K562 (cell line): ENCODE measurements at regions of chr10 and their contacts with region 1.

Region 1: GRCh38 chr10:104209575-104210198 is 22.5 kb downstream of the CFAP43 start:
- DNase-seq: peak; percentile 27 to 46 (median 36)
- ATAC-seq: peak; percentile 87
- H3K4me3 ChIP-seq: no peak overlapping the region
- H3K27ac ChIP-seq: no peak overlapping the region
- H3K4me1 ChIP-seq: no peaks in the 10 kb centered on the region
- H3K27me3 ChIP-seq: no peaks in the 10 kb centered on the region
- CTCF ChIP-seq: peak; percentile 42 to 60 (median 54); a peak in 4 of 6 replicates
- EP300 ChIP-seq: no peak
- POLR2A ChIP-seq: no peak
- RAD21 ChIP-seq: peak; percentile 44 to 69

Region 2: DNA sequence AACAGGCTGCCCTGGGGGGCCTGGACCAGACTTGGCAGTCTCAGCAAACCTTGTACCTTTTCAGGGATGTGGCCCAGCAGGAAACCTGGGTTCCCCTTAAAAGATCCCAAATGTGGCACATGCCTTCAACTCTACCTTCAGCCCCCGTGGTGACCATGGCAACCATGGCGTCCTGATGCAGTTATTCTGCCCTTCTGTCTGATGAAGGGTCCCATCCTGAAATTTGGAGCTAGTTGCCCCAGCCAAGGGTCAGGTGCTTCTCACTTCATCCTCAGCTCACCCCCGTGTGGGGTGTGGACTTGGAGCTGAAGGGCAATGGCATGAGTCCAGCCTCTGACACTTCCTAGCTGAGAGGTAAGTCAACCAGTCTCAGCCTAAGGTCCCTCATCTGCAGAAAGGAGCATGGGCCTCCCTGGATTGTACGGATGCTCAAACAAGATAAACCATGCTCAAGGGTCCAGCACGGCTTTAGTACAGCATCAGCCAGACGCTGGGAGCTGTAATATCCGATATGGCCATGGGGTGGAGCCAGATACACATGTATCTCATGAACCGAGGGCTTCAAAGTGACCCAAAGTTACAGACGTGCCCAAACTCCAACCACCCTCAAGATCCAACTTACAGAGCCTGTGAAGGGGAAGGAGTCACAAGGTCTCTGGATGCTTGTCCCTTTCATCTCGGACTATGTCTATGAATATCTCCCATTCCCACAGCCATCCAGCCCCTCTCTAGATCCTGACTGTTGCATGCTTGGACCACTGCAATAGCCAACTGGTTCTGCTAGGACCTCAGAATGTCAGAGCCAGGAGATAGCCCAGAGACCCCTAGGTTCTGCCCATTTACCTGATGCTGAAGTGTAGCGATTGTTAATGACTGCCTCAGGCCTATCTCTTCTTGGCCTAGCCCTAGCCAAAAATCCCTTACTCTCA is 496.9 kb before region 1 on chr10:
- CTCF ChIA-PET with region 1: no interaction called
- POLR2A ChIA-PET with region 1: interaction called, 4 read pairs
- in situ Hi-C with region 1: loop called (anchors 10 kb)
- intact Hi-C with region 1: loop called (anchors 5 kb)
- DNase-seq: peak; percentile 56 to 75 (median 62)
- ATAC-seq: peak; percentile 93
- H3K4me3 ChIP-seq: no peak overlapping the region
- H3K27ac ChIP-seq: no peak overlapping the region
- H3K4me1 ChIP-seq: no peaks in the 10 kb centered on the region; a peak in 1 of 5 replicates
- H3K27me3 ChIP-seq: peaks cover 0 to 20% of the 10 kb centered on the region in 2 experiments; a peak in 1 of 5 replicates
- CTCF ChIP-seq: peak; percentile 79 to 87 (median 85)
- EP300 ChIP-seq: no peak
- POLR2A ChIP-seq: no peak
- RAD21 ChIP-seq: peak; percentile 87 to 90

Region 3: DNA sequence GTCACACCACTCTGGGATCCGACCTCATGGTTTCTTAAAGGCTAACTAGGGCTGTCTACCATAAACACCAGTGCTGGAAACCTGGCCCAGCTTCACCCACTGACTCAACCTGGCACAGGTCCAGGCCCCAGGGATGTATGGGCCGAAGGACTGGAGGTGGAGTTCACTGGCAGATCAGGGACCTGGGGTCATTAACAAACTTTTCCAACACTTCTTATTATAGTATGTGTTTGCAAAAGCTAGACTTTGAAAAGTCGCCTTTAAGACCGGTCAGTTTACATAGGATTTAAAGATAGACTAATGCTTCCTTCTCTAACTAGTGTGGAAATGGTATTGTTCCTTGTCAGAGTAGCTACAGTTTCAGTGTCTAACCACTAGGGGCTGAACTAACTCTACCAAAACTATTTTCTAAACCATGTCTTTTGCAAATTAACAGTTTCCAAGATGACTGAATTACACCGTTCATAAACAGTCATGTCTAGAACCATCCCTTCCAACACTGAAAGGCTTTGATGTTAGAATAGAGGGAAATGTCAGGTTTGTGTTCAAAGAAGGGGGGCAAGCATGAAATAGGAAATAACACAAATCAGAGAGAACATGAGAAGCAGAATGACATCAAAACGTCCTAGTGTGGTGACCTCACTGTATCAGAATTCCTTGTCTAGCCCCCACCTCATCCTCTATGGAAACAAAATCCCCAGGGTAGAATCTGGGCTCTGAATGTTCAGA is 321.4 kb before region 1 on chr10:
- CTCF ChIA-PET with region 1: interaction called, 4 read pairs
- POLR2A ChIA-PET with region 1: no interaction called
- in situ Hi-C with region 1: loop called (anchors 10 kb)
- intact Hi-C with region 1: loop called (anchors 5 kb)
- DNase-seq: peak; percentile 33 to 46 (median 38)
- ATAC-seq: peak; percentile 80
- H3K4me3 ChIP-seq: no peak overlapping the region
- H3K27ac ChIP-seq: no peak overlapping the region
- H3K4me1 ChIP-seq: no peaks in the 10 kb centered on the region
- H3K27me3 ChIP-seq: no peaks in the 10 kb centered on the region
- CTCF ChIP-seq: peak; percentile 37 to 81 (median 73); a peak in 5 of 6 replicates
- EP300 ChIP-seq: no peak
- POLR2A ChIP-seq: no peak
- RAD21 ChIP-seq: peak; percentile 76 to 88

Region 4: DNA sequence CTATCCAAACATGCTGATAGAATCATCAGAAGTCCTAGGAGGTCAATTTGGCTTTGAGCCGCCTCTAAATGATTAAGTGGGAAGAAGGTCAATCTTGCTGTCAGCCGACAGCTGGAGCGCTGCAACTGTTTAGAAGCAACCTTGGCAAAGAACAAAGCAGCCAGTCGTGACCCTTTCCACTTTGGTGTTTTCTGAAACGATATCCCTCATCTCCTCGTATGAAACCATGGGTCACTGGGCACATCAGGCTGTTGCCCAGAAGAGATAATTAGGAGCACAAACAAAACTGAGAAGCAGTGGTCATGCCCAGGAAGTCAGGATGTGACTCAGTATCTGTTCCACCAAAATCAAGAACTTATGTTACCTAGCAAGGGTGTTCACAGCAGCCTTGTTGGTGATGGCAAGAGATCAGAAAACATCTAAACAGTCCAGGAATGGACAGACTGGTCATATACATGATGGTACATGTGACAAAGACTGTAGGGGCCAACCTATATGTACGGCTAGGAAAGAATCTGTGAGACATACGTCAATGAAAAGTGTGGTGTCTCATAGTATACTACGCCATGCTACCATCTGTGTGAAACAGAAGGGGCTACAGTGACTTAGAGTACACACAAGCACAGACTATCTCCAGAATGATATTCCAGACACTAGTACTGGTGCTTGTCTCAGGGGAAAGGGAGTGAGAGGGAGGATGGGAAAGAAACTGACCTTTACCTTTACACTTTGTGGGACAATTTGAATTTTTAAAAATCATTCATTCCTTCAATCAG is 314.1 kb before region 1 on chr10:
- CTCF ChIA-PET with region 1: no interaction called
- POLR2A ChIA-PET with region 1: no interaction called
- in situ Hi-C with region 1: loop called (anchors 10 kb)
- intact Hi-C with region 1: no loop called
- DNase-seq: no peak
- ATAC-seq: no peak
- H3K4me3 ChIP-seq: no peak overlapping the region
- H3K27ac ChIP-seq: no peak overlapping the region
- H3K4me1 ChIP-seq: no peaks in the 10 kb centered on the region; a peak in 1 of 5 replicates
- H3K27me3 ChIP-seq: no peaks in the 10 kb centered on the region
- CTCF ChIP-seq: no peak
- EP300 ChIP-seq: no peak
- POLR2A ChIP-seq: no peak
- RAD21 ChIP-seq: no peak

Region 5: GRCh38 chr10:104045151-104046089 is 164.3 kb before region 1 on chr10:
- CTCF ChIA-PET with region 1: no interaction called
- POLR2A ChIA-PET with region 1: no interaction called
- in situ Hi-C with region 1: no loop called
- intact Hi-C with region 1: loop called (anchors 1 kb)
- DNase-seq: peak; percentile 17 to 41 (median 30)
- ATAC-seq: peak; percentile 88
- H3K4me3 ChIP-seq: no peak overlapping the region
- H3K27ac ChIP-seq: no peak overlapping the region
- H3K4me1 ChIP-seq: no peaks in the 10 kb centered on the region; a peak in 1 of 5 replicates
- H3K27me3 ChIP-seq: peaks cover 9 to 78% of the 10 kb centered on the region in 2 experiments; a peak in 3 of 5 replicates
- CTCF ChIP-seq: peak; percentile 38 to 57 (median 44); a peak in 5 of 6 replicates
- EP300 ChIP-seq: no peak
- POLR2A ChIP-seq: no peak
- RAD21 ChIP-seq: peak; percentile 48 to 70

Region 6: DNA sequence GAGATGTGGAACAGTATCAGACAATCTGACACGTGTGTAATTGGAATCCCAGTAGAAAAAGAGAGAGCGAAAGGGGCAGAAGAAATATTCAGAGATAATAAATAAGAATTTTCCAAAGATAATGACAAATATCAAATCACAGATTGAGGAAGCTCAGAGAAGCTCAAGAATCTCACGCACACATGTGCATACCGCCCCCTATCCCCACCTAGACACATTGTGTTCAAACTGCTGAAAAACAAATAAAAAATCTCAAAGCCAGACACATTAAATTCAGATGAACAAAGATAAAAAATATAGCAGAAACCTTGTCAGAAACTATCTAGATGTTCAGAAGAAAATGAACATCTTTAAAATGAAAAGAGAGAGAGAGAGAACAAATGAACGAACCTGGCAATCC is 70.5 kb before region 1 on chr10:
- CTCF ChIA-PET with region 1: no interaction called
- POLR2A ChIA-PET with region 1: interaction called, 3 read pairs
- in situ Hi-C with region 1: no loop called
- intact Hi-C with region 1: loop called (anchors 2 kb)
- DNase-seq: peak in 1 of 4 experiments; percentile 8
- ATAC-seq: peak; percentile 55; the same call in 1 of the 3 replicates
- H3K4me3 ChIP-seq: no peak overlapping the region
- H3K27ac ChIP-seq: no peak overlapping the region
- H3K4me1 ChIP-seq: no peaks in the 10 kb centered on the region
- H3K27me3 ChIP-seq: no peaks in the 10 kb centered on the region; a peak in 1 of 5 replicates
- CTCF ChIP-seq: peak; percentile 19 to 54 (median 36); a peak in 3 of 6 replicates
- EP300 ChIP-seq: no peak
- POLR2A ChIP-seq: no peak
- RAD21 ChIP-seq: peak in 1 of 2 experiments; percentile 17; a peak in 2 of 4 replicates